Naive thymus-derived CD8-positive, alpha-beta T cell (primary cell): ENCODE measurements at regions of chr7 and their contacts with region 1.

Region 1: GRCh38 chr7:12211054-12211710 is at the start of gene TMEM106B:
- DNase-seq: peak; percentile 94 to 99 (median 97)
- ATAC-seq: peak; percentile 87 to 88
- H3K4me3 Mint-ChIP-seq: peak within 1 kb of the TSS; percentile 94 to 99 (median 98)
- H3K27ac Mint-ChIP-seq: peak within 1 kb of the TSS; percentile 99 to 100 (median 99)
- H3K4me1 Mint-ChIP-seq: peaks cover 21 to 49% (median 45%) of the 10 kb centered on the region in 4 donors
- H3K27me3 Mint-ChIP-seq: peaks cover 0 to 8% (median 0%) of the 10 kb centered on the region in 5 donors
- polyA plus RNA-seq, gene TMEM106B: 40.9 to 45.6 (median 44.1) TPM

Region 2: GRCh38 chr7:12174931-12175330 is 36.3 kb before region 1 on chr7:
- POLR2A ChIA-PET with region 1: interaction called, 28 read pairs
- DNase-seq: no peak
- ATAC-seq: no peak
- H3K4me3 Mint-ChIP-seq: no peak overlapping the region
- H3K27ac Mint-ChIP-seq: peak overlapping the region in 1 of 10 donors; percentile 4
- H3K4me1 Mint-ChIP-seq: peaks cover 3 to 20% (median 18%) of the 10 kb centered on the region in 4 donors
- H3K27me3 Mint-ChIP-seq: no peaks in the 10 kb centered on the region

Region 3: DNA sequence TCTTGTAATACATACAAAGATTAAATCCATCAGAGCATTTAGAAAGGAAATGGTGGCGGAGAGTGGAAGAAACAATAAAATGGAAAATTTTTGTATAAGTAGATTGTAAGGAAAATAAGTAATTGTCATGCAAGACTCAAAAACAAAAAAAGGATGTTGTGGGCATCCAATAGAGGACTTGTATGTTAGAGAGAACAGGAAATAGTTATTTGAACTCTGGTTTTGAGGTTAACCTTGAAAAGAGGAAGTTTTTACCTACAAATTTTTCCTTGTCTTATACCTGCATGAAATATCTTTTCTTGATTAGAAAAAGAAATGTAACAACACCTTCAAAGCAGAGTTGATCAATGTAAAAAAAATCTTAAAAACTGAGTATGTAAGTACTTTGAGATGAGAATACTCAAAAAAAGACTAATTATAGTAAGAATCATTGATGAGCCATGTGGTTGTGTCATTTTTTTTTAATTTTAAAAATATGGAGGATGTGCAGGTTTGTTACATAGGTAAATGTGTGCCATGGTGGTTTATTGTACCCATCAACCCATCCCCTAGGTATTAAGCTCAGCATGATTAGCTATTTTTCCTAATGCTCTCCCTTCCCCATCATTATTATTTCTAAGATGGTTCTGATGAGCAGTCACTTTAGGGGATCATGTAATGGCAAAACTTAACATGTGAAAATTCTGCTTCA is 11.9 kb after region 1 on chr7:
- POLR2A ChIA-PET with region 1: interaction called, 10 read pairs
- DNase-seq: peak in 3 of 10 donors; percentile 53 to 69 (median 69)
- ATAC-seq: peak; percentile 86 to 93
- H3K4me3 Mint-ChIP-seq: peak overlapping the region in 9 of 10 donors; percentile 37 to 80 (median 67)
- H3K27ac Mint-ChIP-seq: peak overlapping the region; percentile 44 to 84 (median 75)
- H3K4me1 Mint-ChIP-seq: peaks cover 29 to 70% (median 57%) of the 10 kb centered on the region in 4 donors
- H3K27me3 Mint-ChIP-seq: no peaks in the 10 kb centered on the region

Region 4: GRCh38 chr7:12257582-12257981 is 46.4 kb after region 1 on chr7:
- POLR2A ChIA-PET with region 1: interaction called, 18 read pairs
- DNase-seq: peak in 5 of 10 donors; percentile 18 to 71 (median 50)
- ATAC-seq: peak; percentile 93 to 96
- H3K4me3 Mint-ChIP-seq: no peak overlapping the region
- H3K27ac Mint-ChIP-seq: no peak overlapping the region
- H3K4me1 Mint-ChIP-seq: peaks cover 0 to 5% (median under 1%) of the 10 kb centered on the region in 4 donors
- H3K27me3 Mint-ChIP-seq: no peaks in the 10 kb centered on the region

Region 5: DNA sequence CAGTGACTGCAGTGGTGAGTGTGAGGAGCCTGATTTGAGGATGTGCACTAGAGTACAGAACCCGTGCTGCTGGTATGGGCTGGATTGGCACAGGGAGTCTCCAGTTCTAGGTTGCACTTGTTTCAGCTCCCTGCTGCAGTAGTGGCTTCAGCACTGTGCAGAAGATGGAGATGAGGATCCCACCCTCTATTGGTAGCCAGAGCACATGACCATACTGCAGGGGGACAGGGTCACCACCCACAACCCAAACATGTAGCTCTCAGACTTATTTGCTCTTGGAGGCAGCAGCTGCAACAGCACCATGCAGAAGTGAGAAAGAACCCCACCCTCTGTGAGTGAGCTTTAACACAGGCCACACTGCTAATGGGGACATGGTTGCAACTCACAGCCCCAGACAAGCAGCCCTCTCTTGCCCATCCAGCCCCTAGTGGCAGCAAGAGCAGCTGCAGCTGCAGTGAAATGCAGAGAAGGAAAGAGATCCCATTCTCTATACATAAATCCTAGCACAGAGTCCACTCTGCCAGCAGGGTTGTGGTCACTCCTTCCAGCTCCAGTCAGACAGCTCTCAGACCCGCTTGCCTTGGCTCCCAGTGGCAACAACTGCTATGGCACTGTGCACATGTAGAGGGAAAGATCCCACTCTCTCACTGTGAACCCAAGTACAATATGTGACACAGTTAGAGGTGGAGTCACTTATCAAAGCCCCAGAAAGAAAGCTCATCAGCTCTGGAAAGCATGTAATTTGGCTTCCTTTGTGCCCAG is 307.9 kb after region 1 on chr7:
- POLR2A ChIA-PET with region 1: no interaction called
- DNase-seq: no peak
- ATAC-seq: no peak
- H3K4me3 Mint-ChIP-seq: no peak overlapping the region
- H3K27ac Mint-ChIP-seq: no peak overlapping the region
- H3K4me1 Mint-ChIP-seq: no peaks in the 10 kb centered on the region
- H3K27me3 Mint-ChIP-seq: peaks cover 11 to 51% (median 26%) of the 10 kb centered on the region in 5 donors